ENCODE measurements at regions of chr11 and their contacts with region 1.

Region 1: GRCh38 chr11:59135648-59136461 is 6.8 kb upstream of the FAM111A start:
- DNase-seq: peak; percentile 93
- ATAC-seq: peak; percentile 100
- H3K4me3 Mint-ChIP-seq: peak overlapping the region; percentile 11
- H3K27ac Mint-ChIP-seq: peak overlapping the region; percentile 61
- H3K4me1 Mint-ChIP-seq: peaks cover 5% of the 10 kb centered on the region
- H3K27me3 Mint-ChIP-seq: no peaks in the 10 kb centered on the region

Region 2: DNA sequence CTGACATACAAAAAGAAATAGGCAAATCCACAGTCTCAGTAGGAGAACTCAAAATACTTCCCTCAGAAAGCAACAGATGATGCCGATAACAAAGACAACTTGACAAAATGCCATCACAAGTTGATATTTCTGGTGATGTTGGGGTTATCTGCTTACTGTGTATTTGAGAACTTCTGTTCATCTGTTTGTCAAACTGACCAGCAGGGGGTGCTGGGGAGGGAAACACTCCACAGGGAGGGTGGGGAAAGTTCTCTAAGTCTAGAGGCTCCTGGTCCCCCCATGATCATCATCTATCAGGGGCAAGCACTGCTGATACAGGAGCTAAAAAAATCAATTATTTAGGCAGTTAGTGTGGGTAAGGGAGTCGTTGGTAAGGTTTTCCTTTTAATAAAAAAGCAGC is 177.4 kb before region 1 on chr11:
- CTCF ChIA-PET with region 1: interaction called, 5 read pairs
- POLR2A ChIA-PET with region 1: no interaction called
- intact Hi-C with region 1: loop called in 1 of 2 experiments (anchors 5 kb)
- DNase-seq: peak; percentile 68
- ATAC-seq: peak; percentile 51
- H3K4me3 Mint-ChIP-seq: no peak overlapping the region
- H3K27ac Mint-ChIP-seq: no peak overlapping the region
- H3K4me1 Mint-ChIP-seq: peaks cover 7% of the 10 kb centered on the region
- H3K27me3 Mint-ChIP-seq: peaks cover 5% of the 10 kb centered on the region

Region 3: DNA sequence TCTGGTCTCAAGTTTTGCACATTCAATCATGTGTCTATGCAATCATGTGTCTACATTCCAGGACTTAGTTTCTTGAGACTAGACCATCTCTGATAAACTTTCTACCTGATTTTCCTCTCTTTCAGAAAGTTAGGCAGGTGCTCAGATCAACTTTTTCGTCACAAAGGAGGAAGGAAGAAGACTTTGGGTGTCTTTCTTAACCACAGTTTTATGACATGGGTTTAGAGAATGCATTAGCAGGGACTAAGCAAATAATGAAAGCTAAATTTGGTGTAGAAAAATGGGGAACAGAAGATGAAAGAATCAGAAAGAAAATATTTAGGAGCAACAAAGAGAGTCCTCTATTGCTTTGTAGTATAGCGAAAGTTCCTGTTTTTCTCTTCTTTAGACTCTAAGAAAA is 57.4 kb before region 1 on chr11:
- CTCF ChIA-PET with region 1: interaction called, 11 read pairs
- POLR2A ChIA-PET with region 1: no interaction called
- intact Hi-C with region 1: no loop called
- DNase-seq: no peak
- ATAC-seq: no peak
- H3K4me3 Mint-ChIP-seq: no peak overlapping the region
- H3K27ac Mint-ChIP-seq: no peak overlapping the region
- H3K4me1 Mint-ChIP-seq: peaks cover 5% of the 10 kb centered on the region
- H3K27me3 Mint-ChIP-seq: peaks cover 10% of the 10 kb centered on the region

Region 4: GRCh38 chr11:59106363-59107336 is 29.2 kb before region 1 on chr11 and contains the start of gene FAM111B:
- CTCF ChIA-PET with region 1: interaction called, 24 read pairs
- POLR2A ChIA-PET with region 1: no interaction called
- intact Hi-C with region 1: no loop called
- DNase-seq: peak; percentile 86
- ATAC-seq: peak; percentile 87
- H3K4me3 Mint-ChIP-seq: peak within 1 kb of the TSS; percentile 79
- H3K27ac Mint-ChIP-seq: peak within 1 kb of the TSS; percentile 64
- H3K4me1 Mint-ChIP-seq: peaks cover 54% of the 10 kb centered on the region
- H3K27me3 Mint-ChIP-seq: peaks cover 23% of the 10 kb centered on the region
- total RNA-seq, gene FAM111B: 32.3 to 38.9 TPM

Region 5: DNA sequence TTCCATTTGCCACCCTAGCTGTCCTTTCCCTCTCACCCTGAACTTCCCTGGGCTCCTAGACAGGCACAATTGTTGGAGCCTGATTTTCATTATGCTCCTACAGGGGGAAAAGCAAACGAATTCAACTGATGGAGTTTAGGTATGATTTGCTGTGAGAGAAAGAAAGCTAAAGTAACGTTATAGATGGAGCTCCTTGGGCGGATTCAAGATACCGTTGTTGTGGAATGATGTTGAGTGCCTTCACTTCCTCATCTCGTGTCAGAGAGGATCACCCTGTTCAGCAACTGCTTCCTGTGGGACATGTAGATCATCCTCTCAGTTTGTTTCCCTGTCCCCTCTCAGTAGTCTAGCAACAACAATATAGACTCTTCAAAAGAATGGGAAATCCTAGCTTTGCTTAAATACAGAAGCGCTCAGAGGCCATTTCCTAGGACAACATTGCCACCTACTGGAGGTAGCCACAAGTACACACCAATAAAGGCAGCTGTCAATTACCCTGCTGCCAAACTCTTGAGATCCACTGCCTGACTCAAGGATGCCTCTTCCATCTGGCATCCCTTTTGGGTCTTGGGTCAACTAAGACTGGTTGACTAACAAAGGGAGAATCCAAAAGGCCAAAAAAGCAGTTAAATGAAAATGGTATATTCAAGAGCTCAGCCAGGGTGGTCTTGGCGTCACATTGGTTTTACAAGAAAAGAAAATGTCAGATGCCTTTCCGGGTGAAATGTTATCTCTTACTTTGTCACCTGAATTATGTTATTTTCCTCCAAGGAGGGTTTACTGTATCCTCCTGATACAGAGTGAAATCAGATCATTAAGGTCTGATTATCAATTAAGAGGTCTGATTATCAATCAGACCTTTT is 22.6 kb after region 1 on chr11:
- CTCF ChIA-PET with region 1: interaction called, 130 read pairs
- POLR2A ChIA-PET with region 1: no interaction called
- intact Hi-C with region 1: loop called in 1 of 2 experiments (anchors 1 kb)
- DNase-seq: peak; percentile 74
- ATAC-seq: peak; percentile 98
- H3K4me3 Mint-ChIP-seq: no peak overlapping the region
- H3K27ac Mint-ChIP-seq: no peak overlapping the region
- H3K4me1 Mint-ChIP-seq: peaks cover 6% of the 10 kb centered on the region
- H3K27me3 Mint-ChIP-seq: peaks cover 6% of the 10 kb centered on the region

Region 6: GRCh38 chr11:59247531-59248227 is 111.8 kb after region 1 on chr11:
- CTCF ChIA-PET with region 1: no interaction called
- POLR2A ChIA-PET with region 1: no interaction called
- intact Hi-C with region 1: no loop called
- DNase-seq: no peak
- ATAC-seq: no peak
- H3K4me3 Mint-ChIP-seq: no peak overlapping the region
- H3K27ac Mint-ChIP-seq: no peak overlapping the region
- H3K4me1 Mint-ChIP-seq: peaks cover 20% of the 10 kb centered on the region
- H3K27me3 Mint-ChIP-seq: peaks cover 2% of the 10 kb centered on the region

Region 7: GRCh38 chr11:59263225-59263894 is 127.5 kb after region 1 on chr11:
- CTCF ChIA-PET with region 1: no interaction called
- POLR2A ChIA-PET with region 1: no interaction called
- intact Hi-C with region 1: no loop called
- DNase-seq: peak; percentile 22
- ATAC-seq: no peak
- H3K4me3 Mint-ChIP-seq: no peak overlapping the region
- H3K27ac Mint-ChIP-seq: no peak overlapping the region
- H3K4me1 Mint-ChIP-seq: no peaks in the 10 kb centered on the region
- H3K27me3 Mint-ChIP-seq: no peaks in the 10 kb centered on the region

Region 8: DNA sequence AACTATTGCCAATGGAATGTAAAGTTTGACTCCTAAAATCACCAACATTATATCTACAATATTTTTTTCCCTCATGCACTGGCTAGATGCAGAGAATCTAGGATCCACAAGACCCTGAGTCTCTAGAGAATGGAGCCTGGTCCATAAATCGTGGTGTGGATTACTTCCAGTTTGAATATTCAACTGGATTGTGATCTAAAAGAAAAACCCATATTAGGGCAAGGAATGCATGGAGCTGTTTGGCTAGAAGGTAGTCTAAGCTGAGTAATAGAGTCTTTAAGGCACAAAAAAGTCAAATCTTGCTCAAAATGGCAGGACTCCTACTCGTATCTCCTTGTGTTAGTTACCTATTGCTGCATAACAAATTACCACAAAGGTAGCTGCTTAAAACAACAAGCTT is 1284.2 kb after region 1 on chr11:
- CTCF ChIA-PET with region 1: no interaction called
- POLR2A ChIA-PET with region 1: no interaction called
- intact Hi-C with region 1: no loop called
- DNase-seq: no peak
- ATAC-seq: no peak
- H3K4me3 Mint-ChIP-seq: no peak overlapping the region
- H3K27ac Mint-ChIP-seq: no peak overlapping the region
- H3K4me1 Mint-ChIP-seq: no peaks in the 10 kb centered on the region
- H3K27me3 Mint-ChIP-seq: peaks cover 10% of the 10 kb centered on the region

Measured in activated CD4-positive, alpha-beta T cell treated with anti-CD3 and anti-CD28 coated beads for 36 hours (primary cell).